SK-N-SH (cell line): ENCODE measurements at regions of chr5 and their contacts with region 1.

Region 1: GRCh38 chr5:146516151-146516475 is at the start of gene GPR151:
- DNase-seq: no peak
- H3K4me3 ChIP-seq: no peak within 1 kb of the TSS
- H3K27ac ChIP-seq: no peak within 1 kb of the TSS
- H3K4me1 ChIP-seq: no peaks in the 10 kb centered on the region
- H3K27me3 ChIP-seq: no peaks in the 10 kb centered on the region
- CTCF ChIP-seq: no peak
- EP300 ChIP-seq: no peak
- RAD21 ChIP-seq: no peak
- polyA plus RNA-seq, gene GPR151: not detected in 2 replicates

Region 2: DNA sequence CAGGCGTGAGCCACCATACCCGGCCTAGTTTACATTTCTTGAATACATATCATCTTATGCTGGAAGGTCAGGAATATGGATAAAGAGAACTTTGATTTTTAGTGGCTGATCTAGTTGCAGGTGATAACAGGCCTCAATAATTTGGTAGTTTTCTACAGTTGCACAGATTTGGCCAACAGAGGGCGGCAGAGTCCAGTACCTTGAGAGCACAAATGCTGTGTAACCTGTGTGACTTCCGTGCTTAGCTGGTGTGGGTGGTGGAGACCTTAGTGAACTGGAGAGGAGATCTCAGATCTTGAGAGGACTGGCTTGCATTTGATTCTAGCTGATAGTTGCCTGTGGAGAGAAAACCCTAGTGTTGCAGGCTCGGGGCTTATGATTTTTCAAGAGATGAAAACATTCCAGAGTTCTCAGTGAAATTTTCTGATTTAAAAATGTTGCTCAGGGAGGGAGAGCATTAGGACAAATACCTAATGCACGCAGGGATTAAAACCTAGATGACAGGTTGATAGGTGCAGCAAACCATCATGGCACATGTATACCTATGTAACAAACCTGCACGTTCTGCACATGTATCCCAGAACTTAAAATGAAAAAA is 17.2 kb after region 1 on chr5:
- CTCF ChIA-PET with region 1: interaction called, 33 read pairs
- POLR2A ChIA-PET with region 1: interaction called, 3 read pairs
- DNase-seq: peak; percentile 71
- H3K4me3 ChIP-seq: no peak overlapping the region; a peak in 1 of 4 replicates
- H3K27ac ChIP-seq: no peak overlapping the region
- H3K4me1 ChIP-seq: no peaks in the 10 kb centered on the region
- H3K27me3 ChIP-seq: no peaks in the 10 kb centered on the region
- CTCF ChIP-seq: peak; percentile 93
- EP300 ChIP-seq: no peak
- RAD21 ChIP-seq: peak; percentile 95